Activated CD4-positive, alpha-beta T cell treated with anti-CD3 and anti-CD28 coated beads for 36 hours (primary cell): ENCODE measurements at regions of chr1 and their contacts with region 1.

Region 1: GRCh38 chr1:12511516-12512468 is 106.2 kb downstream of the DHRS3 start:
- DNase-seq: no peak
- ATAC-seq: no peak
- H3K4me3 Mint-ChIP-seq: peak overlapping the region; percentile 58
- H3K27ac Mint-ChIP-seq: peak overlapping the region; percentile 99
- H3K4me1 Mint-ChIP-seq: peaks cover 54% of the 10 kb centered on the region
- H3K27me3 Mint-ChIP-seq: no peaks in the 10 kb centered on the region

Region 2: DNA sequence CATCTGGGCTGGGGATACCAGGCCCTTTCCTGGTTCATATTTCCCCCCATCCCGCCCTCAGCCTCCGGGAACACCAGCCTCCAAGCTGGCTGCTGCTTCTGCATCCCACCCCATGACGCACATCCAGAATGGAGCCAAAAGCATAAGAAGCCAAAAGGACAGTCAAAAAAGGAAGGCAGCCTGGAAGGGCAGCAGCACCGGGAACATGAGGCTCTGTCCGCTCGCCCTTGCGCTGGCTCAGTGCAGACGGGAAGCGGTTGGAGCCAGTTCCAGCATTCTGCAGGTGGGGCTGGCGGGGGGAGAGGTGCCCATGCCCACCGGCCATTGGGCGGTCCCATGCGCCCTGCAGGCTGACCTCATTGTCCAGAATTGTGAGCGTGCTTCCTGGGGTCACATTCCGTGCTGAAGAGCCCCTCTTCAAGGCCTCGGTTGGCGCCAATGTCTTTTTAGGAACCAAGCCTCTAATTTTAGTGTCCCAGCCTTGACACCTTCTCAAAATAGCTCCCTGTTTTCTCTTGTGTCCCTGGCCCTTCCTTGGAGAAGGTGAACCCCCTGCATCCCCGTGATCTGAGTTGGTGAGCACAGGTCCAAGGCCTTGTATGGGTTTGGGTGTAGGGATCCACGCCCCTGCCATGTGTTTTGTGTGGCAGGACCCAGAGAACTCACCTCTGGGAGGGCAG is 624.7 kb before region 1 on chr1:
- CTCF ChIA-PET with region 1: no interaction called
- POLR2A ChIA-PET with region 1: no interaction called
- intact Hi-C with region 1: no loop called
- DNase-seq: no peak
- ATAC-seq: no peak
- H3K4me3 Mint-ChIP-seq: no peak overlapping the region
- H3K27ac Mint-ChIP-seq: no peak overlapping the region
- H3K4me1 Mint-ChIP-seq: no peaks in the 10 kb centered on the region
- H3K27me3 Mint-ChIP-seq: peaks cover under 1% of the 10 kb centered on the region

Region 3: GRCh38 chr1:12344596-12345349 is 167.0 kb before region 1 on chr1:
- CTCF ChIA-PET with region 1: no interaction called
- POLR2A ChIA-PET with region 1: no interaction called
- intact Hi-C with region 1: no loop called
- DNase-seq: peak; percentile 58
- ATAC-seq: peak; percentile 68
- H3K4me3 Mint-ChIP-seq: peak overlapping the region; percentile 63
- H3K27ac Mint-ChIP-seq: peak overlapping the region; percentile 93
- H3K4me1 Mint-ChIP-seq: peaks cover 61% of the 10 kb centered on the region
- H3K27me3 Mint-ChIP-seq: no peaks in the 10 kb centered on the region

Region 4: DNA sequence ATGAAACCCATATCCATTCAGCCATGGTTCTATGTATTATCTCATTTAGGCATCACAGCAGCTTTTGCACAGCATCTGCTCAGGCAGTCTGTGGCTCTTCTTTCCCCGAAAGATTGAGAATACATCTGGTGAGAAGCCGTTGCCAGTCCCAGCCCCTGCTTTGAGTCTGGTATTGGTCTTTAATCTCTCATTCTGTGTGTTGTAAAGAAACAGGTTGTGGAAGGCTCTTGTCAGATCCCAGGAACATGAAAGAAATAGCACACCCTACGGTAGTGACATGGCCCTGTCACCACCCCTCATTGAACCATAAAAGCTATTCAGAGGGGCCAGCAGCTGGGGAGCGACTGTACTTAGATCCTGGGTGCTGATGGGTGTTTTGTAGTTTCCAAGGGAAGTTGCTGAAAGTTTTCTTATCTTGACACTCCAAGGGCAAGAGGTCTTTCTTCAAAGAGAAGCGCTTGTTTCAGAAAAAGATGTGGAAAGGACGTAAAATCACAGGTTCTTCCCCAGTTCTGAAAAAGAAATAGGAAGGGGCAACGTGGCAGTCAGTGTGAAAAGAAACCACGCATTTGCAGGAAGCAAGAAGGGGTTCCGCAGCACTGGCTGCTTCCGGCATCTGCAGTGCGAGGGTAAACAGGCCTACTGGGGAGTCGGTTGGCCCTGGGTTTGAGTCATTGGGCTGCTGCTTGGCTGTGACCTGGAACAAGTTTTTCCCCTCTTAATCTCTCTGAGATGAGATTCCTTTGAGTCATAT is 38.8 kb before region 1 on chr1:
- CTCF ChIA-PET with region 1: interaction called, 4 read pairs
- POLR2A ChIA-PET with region 1: interaction called, 5 read pairs
- intact Hi-C with region 1: loop called (anchors 1 kb)
- DNase-seq: peak; percentile 91
- ATAC-seq: peak; percentile 94
- H3K4me3 Mint-ChIP-seq: peak overlapping the region; percentile 59
- H3K27ac Mint-ChIP-seq: peak overlapping the region; percentile 97
- H3K4me1 Mint-ChIP-seq: peaks cover 89% of the 10 kb centered on the region
- H3K27me3 Mint-ChIP-seq: no peaks in the 10 kb centered on the region

Region 5: GRCh38 chr1:12480748-12481362 is 30.9 kb before region 1 on chr1:
- CTCF ChIA-PET with region 1: interaction called, 4 read pairs
- POLR2A ChIA-PET with region 1: interaction called, 5 read pairs
- intact Hi-C with region 1: loop called in 1 of 2 experiments (anchors 2 kb)
- DNase-seq: peak; percentile 40
- ATAC-seq: peak; percentile 72
- H3K4me3 Mint-ChIP-seq: no peak overlapping the region
- H3K27ac Mint-ChIP-seq: peak overlapping the region; percentile 77
- H3K4me1 Mint-ChIP-seq: peaks cover 64% of the 10 kb centered on the region
- H3K27me3 Mint-ChIP-seq: no peaks in the 10 kb centered on the region

Region 6: GRCh38 chr1:12501661-12502060 is 10.1 kb before region 1 on chr1:
- CTCF ChIA-PET with region 1: no interaction called
- POLR2A ChIA-PET with region 1: interaction called, 13 read pairs
- intact Hi-C with region 1: loop called in 1 of 2 experiments (anchors 1 kb)
- DNase-seq: no peak
- ATAC-seq: no peak
- H3K4me3 Mint-ChIP-seq: no peak overlapping the region
- H3K27ac Mint-ChIP-seq: peak overlapping the region; percentile 68
- H3K4me1 Mint-ChIP-seq: peaks cover 45% of the 10 kb centered on the region
- H3K27me3 Mint-ChIP-seq: no peaks in the 10 kb centered on the region

Region 7: GRCh38 chr1:12568009-12568767 is 56.4 kb after region 1 on chr1:
- CTCF ChIA-PET with region 1: no interaction called
- POLR2A ChIA-PET with region 1: no interaction called
- intact Hi-C with region 1: no loop called
- DNase-seq: no peak
- ATAC-seq: no peak
- H3K4me3 Mint-ChIP-seq: no peak overlapping the region
- H3K27ac Mint-ChIP-seq: no peak overlapping the region
- H3K4me1 Mint-ChIP-seq: peaks cover 2% of the 10 kb centered on the region
- H3K27me3 Mint-ChIP-seq: no peaks in the 10 kb centered on the region

Region 8: DNA sequence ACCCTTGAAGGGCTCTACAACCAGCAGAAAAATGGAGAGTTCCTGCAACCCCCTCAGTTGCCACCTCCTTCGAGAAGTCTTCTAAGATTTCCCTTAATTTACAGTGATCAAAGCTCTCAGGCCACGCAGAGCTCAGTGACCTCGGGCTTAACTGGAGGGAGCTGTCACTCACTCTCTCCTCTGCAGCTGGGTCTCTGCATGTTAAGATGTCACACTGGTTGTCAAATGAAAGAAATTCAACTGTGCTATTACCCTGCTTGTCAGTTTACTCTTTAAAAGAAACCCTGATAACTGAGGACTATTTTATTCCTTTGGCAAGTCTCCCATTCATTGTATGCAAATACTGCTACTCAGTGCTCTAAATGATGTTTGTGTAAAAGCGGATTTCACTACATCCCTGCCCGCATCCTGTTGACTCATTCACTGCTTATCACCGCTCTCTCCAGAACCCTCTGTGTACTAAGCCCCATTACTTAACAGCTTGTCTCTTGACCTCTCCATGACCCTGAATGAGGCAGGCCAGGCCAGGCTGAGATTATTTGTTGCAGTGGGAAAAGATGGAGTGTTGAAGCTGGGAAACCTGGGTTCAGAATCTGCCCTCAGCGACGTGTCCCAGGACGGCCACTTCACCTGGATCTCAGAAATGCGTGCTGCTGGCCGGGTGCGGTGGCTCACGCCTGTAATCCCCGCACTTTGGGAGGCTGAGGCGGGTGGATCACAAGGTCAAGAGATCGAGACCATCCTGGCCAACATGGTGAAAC is 92.5 kb after region 1 on chr1:
- CTCF ChIA-PET with region 1: no interaction called
- POLR2A ChIA-PET with region 1: no interaction called
- intact Hi-C with region 1: loop called (anchors 2 to 5 kb)
- DNase-seq: peak; percentile 85
- ATAC-seq: peak; percentile 97
- H3K4me3 Mint-ChIP-seq: peak overlapping the region; percentile 21
- H3K27ac Mint-ChIP-seq: peak overlapping the region; percentile 74
- H3K4me1 Mint-ChIP-seq: peaks cover 49% of the 10 kb centered on the region
- H3K27me3 Mint-ChIP-seq: no peaks in the 10 kb centered on the region

Region 9: DNA sequence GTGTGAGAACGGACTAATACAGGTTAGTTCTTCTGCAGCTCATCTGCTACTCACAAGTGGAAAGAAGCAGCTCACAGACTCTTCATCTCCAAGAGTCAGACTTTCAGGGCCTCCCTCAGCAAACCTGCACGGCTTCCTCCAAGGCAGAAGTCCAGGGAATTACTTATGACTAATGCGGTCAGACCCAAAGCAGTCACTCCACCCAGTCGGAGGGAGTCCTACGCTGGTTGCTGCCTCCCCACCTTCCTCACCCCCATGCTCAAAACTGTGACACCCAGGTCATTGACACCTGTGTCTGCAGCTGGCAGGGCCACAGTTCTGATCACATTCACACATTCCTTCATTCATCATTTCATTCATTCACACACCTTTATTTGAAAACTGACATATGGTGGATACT is 1149.7 kb after region 1 on chr1:
- CTCF ChIA-PET with region 1: no interaction called
- POLR2A ChIA-PET with region 1: no interaction called
- intact Hi-C with region 1: no loop called
- DNase-seq: no peak
- ATAC-seq: no peak
- H3K4me3 Mint-ChIP-seq: no peak overlapping the region
- H3K27ac Mint-ChIP-seq: no peak overlapping the region
- H3K4me1 Mint-ChIP-seq: peaks cover 4% of the 10 kb centered on the region
- H3K27me3 Mint-ChIP-seq: peaks cover 5% of the 10 kb centered on the region